ENCODE measurements at regions of chr7 and their contacts with region 1.

Region 1: GRCh38 chr7:87219545-87220025 is at the start of gene TMEM243:
- DNase-seq: peak; percentile 84 to 92 (median 87)
- H3K4me3 ChIP-seq: peak within 1 kb of the TSS; percentile 83 to 99
- H3K4me3 Mint-ChIP-seq: peak within 1 kb of the TSS; percentile 97 to 100 (median 99)
- H3K27ac ChIP-seq: peak within 1 kb of the TSS; percentile 92
- H3K27ac Mint-ChIP-seq: peak within 1 kb of the TSS; percentile 98 to 100 (median 99)
- H3K4me1 ChIP-seq: peaks cover 45% of the 10 kb centered on the region
- H3K4me1 Mint-ChIP-seq: peaks cover 26 to 62% (median 37%) of the 10 kb centered on the region in 4 donors
- H3K27me3 ChIP-seq: no peaks in the 10 kb centered on the region
- H3K27me3 Mint-ChIP-seq: peaks cover 0 to 1% of the 10 kb centered on the region in 2 donors
- total RNA-seq, gene TMEM243: 103 to 105 TPM

Region 2: GRCh38 chr7:86978808-86979506 is 240.6 kb before region 1 on chr7:
- CTCF ChIA-PET with region 1: interaction called, 3 read pairs
- POLR2A ChIA-PET with region 1: interaction called, 9 read pairs
- intact Hi-C with region 1: loop called (anchors 1 kb)
- DNase-seq: peak; percentile 74 to 89 (median 84)
- H3K4me3 ChIP-seq: no peak overlapping the region
- H3K4me3 Mint-ChIP-seq: peak overlapping the region in 6 of 8 donors; percentile 30 to 74 (median 44)
- H3K27ac ChIP-seq: peak overlapping the region; percentile 65
- H3K27ac Mint-ChIP-seq: peak overlapping the region; percentile 87 to 98 (median 95)
- H3K4me1 ChIP-seq: peaks cover 34% of the 10 kb centered on the region
- H3K4me1 Mint-ChIP-seq: peaks cover 28 to 55% (median 44%) of the 10 kb centered on the region in 4 donors
- H3K27me3 ChIP-seq: no peaks in the 10 kb centered on the region
- H3K27me3 Mint-ChIP-seq: no peaks in the 10 kb centered on the region

Region 3: GRCh38 chr7:87159538-87159937 is 60.0 kb before region 1 on chr7:
- CTCF ChIA-PET with region 1: interaction called, 6 read pairs
- POLR2A ChIA-PET with region 1: interaction called, 189 read pairs
- intact Hi-C with region 1: no loop called
- DNase-seq: no peak
- H3K4me3 ChIP-seq: no peak overlapping the region
- H3K4me3 Mint-ChIP-seq: no peak overlapping the region
- H3K27ac ChIP-seq: no peak overlapping the region
- H3K27ac Mint-ChIP-seq: no peak overlapping the region
- H3K4me1 ChIP-seq: peaks cover 68% of the 10 kb centered on the region
- H3K4me1 Mint-ChIP-seq: peaks cover 38 to 64% (median 53%) of the 10 kb centered on the region in 4 donors
- H3K27me3 ChIP-seq: no peaks in the 10 kb centered on the region
- H3K27me3 Mint-ChIP-seq: no peaks in the 10 kb centered on the region

Region 4: DNA sequence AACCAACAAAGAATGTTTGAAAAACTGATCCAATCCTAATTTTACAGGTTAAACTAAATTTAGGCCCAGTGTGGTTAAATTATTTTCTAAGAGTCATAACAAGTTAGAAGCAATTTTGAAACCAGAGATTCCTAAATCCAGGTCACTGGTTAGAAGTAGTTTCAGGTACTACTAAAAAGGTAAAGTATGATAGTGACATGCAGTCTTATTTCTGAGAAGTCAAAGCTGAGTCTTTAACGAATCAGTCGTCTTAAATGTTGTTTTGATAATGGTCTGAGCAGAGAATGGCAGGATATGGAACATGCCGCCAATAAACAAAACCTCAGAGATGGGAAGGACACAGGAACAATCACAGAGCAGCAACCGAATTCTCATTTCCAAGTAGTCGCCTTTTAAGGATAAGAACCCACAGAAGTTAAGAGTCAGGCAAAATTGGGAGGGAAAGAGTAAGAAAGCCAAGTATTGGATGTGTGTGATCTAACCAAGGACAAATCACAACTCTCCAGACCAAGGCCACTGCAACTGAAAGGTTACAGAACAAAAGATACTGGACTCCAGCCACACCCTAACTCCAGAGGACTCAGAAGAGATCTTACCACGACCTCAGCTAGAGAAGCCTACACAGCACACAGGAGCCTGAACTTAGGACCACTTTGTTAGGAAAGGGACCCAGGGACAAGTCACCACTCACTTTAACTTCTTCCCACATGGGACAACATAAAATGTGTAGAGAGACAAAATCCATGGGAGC is 19.7 kb before region 1 on chr7:
- CTCF ChIA-PET with region 1: interaction called, 6 read pairs
- POLR2A ChIA-PET with region 1: interaction called, 60 read pairs
- intact Hi-C with region 1: loop called (anchors 2 kb)
- DNase-seq: no peak
- H3K4me3 ChIP-seq: no peak overlapping the region
- H3K4me3 Mint-ChIP-seq: peak overlapping the region in 4 of 8 donors; percentile 6 to 54 (median 32)
- H3K27ac ChIP-seq: no peak overlapping the region
- H3K27ac Mint-ChIP-seq: peak overlapping the region; percentile 17 to 85 (median 64)
- H3K4me1 ChIP-seq: peaks cover 53% of the 10 kb centered on the region
- H3K4me1 Mint-ChIP-seq: peaks cover 45 to 67% (median 59%) of the 10 kb centered on the region in 4 donors
- H3K27me3 ChIP-seq: no peaks in the 10 kb centered on the region
- H3K27me3 Mint-ChIP-seq: no peaks in the 10 kb centered on the region

Region 5: DNA sequence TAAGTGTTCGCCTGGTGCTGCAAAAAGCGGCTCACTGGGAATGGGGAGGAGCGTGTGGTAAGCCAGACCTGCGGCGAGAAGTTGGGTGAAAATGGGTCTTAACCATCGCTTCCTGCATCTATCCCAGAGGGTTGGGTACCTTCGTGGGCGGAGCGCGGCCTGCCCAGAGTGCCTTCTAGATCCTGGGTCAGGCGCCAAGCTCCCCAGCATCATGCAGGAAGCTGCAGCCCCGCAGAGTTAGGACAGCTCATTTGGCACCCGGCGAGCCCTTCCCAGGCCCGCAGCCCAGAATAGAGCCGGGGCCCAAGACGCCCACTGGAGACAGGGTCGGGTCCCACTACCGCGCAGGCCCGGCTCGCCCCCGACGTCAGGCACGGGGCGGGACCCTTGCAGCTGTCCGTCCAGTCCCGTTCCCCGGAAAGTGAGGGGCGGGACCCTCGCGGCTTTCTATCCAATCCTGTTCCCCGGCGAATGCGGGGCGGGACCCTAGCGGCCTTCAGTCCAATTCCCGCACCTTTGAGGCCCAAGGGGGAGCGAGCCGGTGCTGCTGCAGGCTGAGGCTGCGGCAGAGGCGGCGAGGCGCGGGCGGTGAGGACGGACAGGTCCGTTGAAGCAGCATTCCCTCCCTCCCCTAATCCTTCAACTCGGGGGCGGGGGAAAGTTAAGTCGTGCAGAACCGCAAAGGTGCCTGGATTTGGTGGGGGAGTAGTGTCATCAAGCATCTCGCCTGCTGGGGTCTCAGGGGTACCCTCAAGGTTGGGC is 125.8 kb after region 1 on chr7 and contains the start of gene CROT:
- CTCF ChIA-PET with region 1: no interaction called
- POLR2A ChIA-PET with region 1: interaction called, 21 read pairs
- intact Hi-C with region 1: loop called (anchors 1 kb)
- DNase-seq: peak; percentile 91 to 94 (median 92)
- H3K4me3 ChIP-seq: peak within 1 kb of the TSS; percentile 13 to 73
- H3K4me3 Mint-ChIP-seq: peak within 1 kb of the TSS; percentile 89 to 97 (median 96)
- H3K27ac ChIP-seq: peak within 1 kb of the TSS; percentile 80
- H3K27ac Mint-ChIP-seq: peak within 1 kb of the TSS; percentile 94 to 98 (median 95)
- H3K4me1 ChIP-seq: peaks cover 44% of the 10 kb centered on the region
- H3K4me1 Mint-ChIP-seq: peaks cover 33 to 57% (median 46%) of the 10 kb centered on the region in 4 donors
- H3K27me3 ChIP-seq: no peaks in the 10 kb centered on the region
- H3K27me3 Mint-ChIP-seq: no peaks in the 10 kb centered on the region
- total RNA-seq, gene CROT: 17.8 to 19.0 TPM

Region 6: DNA sequence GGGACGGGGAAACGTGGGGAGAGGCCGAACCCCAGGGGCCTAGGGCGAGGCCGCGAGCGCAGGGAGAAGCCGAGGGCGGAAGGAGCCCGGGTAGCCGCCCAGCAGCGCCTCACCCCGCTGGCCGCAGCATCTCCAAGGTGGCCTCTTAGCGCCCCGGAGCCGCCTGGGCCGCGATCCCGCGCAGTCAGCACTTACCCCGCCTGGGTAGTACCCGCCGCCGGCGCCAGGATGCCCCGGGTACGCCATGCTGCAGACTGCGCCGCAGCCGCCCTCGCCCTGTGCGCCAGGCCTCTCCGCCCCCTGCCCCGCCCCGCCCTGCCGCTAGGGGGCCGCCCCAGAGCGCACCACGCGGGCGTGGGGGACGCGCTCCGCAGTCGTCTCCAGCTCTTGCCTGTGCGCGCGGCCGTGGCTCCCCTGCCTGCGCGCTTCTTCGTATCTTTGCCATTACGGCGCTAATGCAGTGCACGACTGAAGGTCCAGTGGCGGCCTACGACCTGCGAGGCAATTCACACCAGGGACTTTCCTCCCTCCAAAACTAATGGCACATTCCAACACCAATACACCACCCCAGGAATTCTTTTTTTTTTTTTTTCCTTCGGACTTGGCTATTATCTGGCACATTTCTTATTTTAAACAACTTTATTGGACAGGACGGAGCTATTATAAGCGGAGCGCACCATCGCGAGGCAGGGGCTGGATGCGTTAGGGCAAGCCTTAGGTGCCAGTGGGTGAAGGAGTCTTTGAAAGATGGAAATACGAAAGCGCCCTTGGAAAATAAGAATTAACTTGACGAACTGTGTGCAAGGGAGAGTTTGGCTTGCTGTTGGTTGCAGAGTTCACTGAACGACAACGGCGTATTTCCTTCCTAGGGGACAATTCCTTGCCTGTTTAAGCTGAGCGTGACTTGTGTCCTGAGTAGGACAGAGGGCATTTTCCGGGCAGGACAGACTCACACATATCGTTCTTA is 1000.5 kb after region 1 on chr7 and contains the start of gene SRI:
- CTCF ChIA-PET with region 1: no interaction called
- POLR2A ChIA-PET with region 1: interaction called, 4 read pairs
- intact Hi-C with region 1: loop called (anchors 10 kb)
- DNase-seq: peak; percentile 89 to 95 (median 93)
- H3K4me3 ChIP-seq: peak within 1 kb of the TSS; percentile 76 to 77
- H3K4me3 Mint-ChIP-seq: peak within 1 kb of the TSS; percentile 91 to 98 (median 96)
- H3K27ac ChIP-seq: peak within 1 kb of the TSS; percentile 76
- H3K27ac Mint-ChIP-seq: peak within 1 kb of the TSS; percentile 86 to 99 (median 95)
- H3K4me1 ChIP-seq: peaks cover 23% of the 10 kb centered on the region
- H3K4me1 Mint-ChIP-seq: peaks cover 25 to 46% (median 31%) of the 10 kb centered on the region in 4 donors
- H3K27me3 ChIP-seq: no peaks in the 10 kb centered on the region
- H3K27me3 Mint-ChIP-seq: peaks cover 0 to 4% of the 10 kb centered on the region in 2 donors
- total RNA-seq, gene SRI: 76.1 to 80.0 TPM

Measured in CD4-positive, alpha-beta memory T cell (primary cell).